Vagina (tissue), 2 donors: ENCODE measurements at regions of chr17 and their contacts with region 1.

Region 1: DNA sequence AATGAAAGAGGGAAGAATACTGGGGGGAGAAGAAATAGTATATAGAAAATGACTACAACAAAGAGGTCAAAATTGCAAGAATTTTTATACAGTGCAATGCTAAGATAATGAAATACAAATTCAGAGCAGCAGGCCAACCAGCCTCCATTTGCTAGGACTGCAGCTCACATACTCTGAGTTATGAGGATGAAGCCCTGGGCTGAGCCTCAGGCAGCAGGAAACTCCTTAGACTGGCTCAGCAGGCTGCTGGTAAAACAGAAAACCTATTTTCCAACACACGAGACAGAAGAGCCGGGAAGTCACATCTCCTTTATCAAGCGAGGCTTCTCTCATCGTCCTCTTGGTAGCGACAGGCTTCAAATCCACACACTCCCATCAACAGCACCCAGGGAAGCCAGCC is 296.5 kb downstream of the SLC39A11 start:
- DNase-seq: no peak
- H3K4me3 ChIP-seq: no peak overlapping the region
- H3K27ac ChIP-seq: no peak overlapping the region
- H3K4me1 ChIP-seq: no peaks in the 10 kb centered on the region
- H3K27me3 ChIP-seq: no peaks in the 10 kb centered on the region
- CTCF ChIP-seq: no peak
- POLR2A ChIP-seq: no peak

Region 2: GRCh38 chr17:72538901-72539352 is 257.0 kb before region 1 on chr17:
- intact Hi-C with region 1: no loop called
- DNase-seq: no peak
- H3K4me3 ChIP-seq: no peak overlapping the region
- H3K27ac ChIP-seq: no peak overlapping the region
- H3K4me1 ChIP-seq: peaks cover 12% of the 10 kb centered on the region
- H3K27me3 ChIP-seq: no peaks in the 10 kb centered on the region
- CTCF ChIP-seq: no peak
- POLR2A ChIP-seq: no peak

Region 3: DNA sequence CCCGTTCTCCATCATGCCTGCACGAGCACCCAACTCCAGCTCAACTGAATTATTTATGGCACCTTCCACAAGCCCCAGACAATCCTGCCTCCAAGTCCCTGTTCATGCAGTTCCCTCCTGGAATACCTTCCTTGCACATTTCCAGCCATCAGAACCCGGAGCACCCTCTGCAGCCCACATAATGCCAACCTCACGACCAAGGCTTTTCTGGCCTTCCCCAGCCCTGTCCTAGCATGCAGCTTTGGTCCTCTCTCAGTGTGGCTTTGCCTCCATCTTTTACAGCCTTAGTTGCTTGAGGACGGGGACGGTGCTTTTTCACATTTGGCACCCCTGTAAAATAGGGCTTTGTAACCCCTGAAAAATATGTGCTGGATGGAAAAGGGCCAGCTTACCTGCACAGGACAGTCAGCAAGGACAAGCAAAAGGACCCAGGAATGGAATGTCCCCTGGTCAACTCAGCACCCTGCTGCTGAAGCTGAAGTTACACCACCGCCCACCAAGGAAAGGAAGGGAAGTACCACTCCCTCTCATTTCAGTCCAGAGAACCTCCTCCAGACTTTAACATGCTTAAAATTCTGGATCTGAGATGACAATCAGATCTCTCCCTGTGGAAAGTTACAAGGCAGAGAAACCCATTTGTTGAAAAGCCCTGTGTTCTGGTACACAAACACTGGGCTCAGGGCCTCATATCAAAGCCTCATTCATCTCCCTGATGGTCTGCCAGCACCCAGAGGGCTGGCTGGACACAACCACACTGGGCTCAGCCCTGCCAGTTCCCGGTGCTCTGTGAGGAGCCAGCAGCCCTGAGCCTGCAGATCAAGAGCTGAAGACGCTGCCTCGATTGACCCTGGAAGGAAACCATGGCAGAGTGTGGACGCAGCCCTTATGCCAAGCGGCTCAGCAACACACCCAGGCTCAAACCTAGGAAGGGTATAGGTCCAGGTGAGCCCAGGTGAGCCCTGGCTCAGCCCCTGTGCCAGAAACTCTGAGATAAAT is 293.7 kb after region 1 on chr17:
- intact Hi-C with region 1: loop called (anchors 5 kb)
- DNase-seq: no peak
- H3K4me3 ChIP-seq: no peak overlapping the region
- H3K27ac ChIP-seq: no peak overlapping the region
- H3K4me1 ChIP-seq: peaks cover 28% of the 10 kb centered on the region
- H3K27me3 ChIP-seq: no peaks in the 10 kb centered on the region
- CTCF ChIP-seq: no peak
- POLR2A ChIP-seq: no peak